HEK293T (cell line): ENCODE measurements at regions of chr14 and their contacts with region 1.

Region 1: DNA sequence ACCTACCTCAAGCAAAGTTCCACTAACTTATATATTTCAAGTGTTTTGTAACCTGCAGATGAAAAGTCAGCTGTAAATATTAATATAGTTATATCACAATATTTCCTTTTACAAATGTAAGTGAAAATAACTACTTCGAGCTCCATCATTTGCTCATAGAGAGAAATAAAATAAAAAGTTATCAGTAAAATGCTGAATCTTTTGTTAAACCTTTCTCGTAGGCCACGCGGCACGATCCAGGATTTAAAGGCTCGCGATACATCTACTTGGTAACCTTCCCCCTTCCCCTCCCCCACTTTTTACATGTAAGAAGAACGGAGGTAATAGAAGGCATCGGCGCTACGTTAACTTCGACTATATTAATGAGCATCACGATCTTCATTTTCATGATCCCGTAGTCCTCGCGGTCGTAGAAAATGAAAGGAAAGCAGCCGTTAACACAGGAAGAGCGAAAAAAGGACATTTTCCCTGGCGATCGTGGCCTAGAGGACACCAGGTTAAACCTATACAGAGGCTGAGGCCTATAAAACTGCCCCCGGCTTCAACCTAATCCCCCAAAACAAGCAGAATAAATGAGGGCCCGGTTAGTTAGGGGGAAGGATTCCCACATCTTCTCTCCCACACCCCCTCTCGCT is 508 bp downstream of the HNRNPC start:
- DNase-seq: no peak

Region 2: GRCh38 chr14:21227150-21227549 is 41.6 kb before region 1 on chr14:
- CTCF ChIA-PET with region 1: no interaction called
- POLR2A ChIA-PET with region 1: no interaction called
- DNase-seq: no peak

Region 3: GRCh38 chr14:21257394-21257909 is 11.3 kb before region 1 on chr14:
- CTCF ChIA-PET with region 1: no interaction called
- POLR2A ChIA-PET with region 1: interaction called, 39 read pairs
- DNase-seq: no peak

Region 4: GRCh38 chr14:21308479-21309237 is 39.9 kb after region 1 on chr14:
- CTCF ChIA-PET with region 1: no interaction called
- POLR2A ChIA-PET with region 1: interaction called, 11 read pairs
- DNase-seq: peak; percentile 67